Activated naive CD4-positive, alpha-beta T cell treated with anti-CD3 and anti-CD28 coated beads for 36 hours (primary cell): ENCODE measurements at regions of chr17 and their contacts with region 1.

Region 1: GRCh38 chr17:59220376-59221158 is at the start of gene GDPD1:
- DNase-seq: peak; percentile 97
- H3K4me3 Mint-ChIP-seq: peak within 1 kb of the TSS; percentile 93
- H3K27ac Mint-ChIP-seq: peak within 1 kb of the TSS; percentile 56
- H3K4me1 Mint-ChIP-seq: peaks cover 13% of the 10 kb centered on the region
- H3K27me3 Mint-ChIP-seq: no peaks in the 10 kb centered on the region
- total RNA-seq, gene GDPD1: 2.2 TPM

Region 2: GRCh38 chr17:59106463-59107305 is 113.9 kb before region 1 on chr17 and contains the start of gene TRIM37:
- CTCF ChIA-PET with region 1: no interaction called
- intact Hi-C with region 1: loop called (anchors 5 kb)
- DNase-seq: peak; percentile 99
- H3K4me3 Mint-ChIP-seq: peak within 1 kb of the TSS; percentile 96
- H3K27ac Mint-ChIP-seq: peak within 1 kb of the TSS; percentile 89
- H3K4me1 Mint-ChIP-seq: peaks cover 54% of the 10 kb centered on the region
- H3K27me3 Mint-ChIP-seq: no peaks in the 10 kb centered on the region
- total RNA-seq, gene TRIM37: 19.9 to 24.1 TPM

Region 3: DNA sequence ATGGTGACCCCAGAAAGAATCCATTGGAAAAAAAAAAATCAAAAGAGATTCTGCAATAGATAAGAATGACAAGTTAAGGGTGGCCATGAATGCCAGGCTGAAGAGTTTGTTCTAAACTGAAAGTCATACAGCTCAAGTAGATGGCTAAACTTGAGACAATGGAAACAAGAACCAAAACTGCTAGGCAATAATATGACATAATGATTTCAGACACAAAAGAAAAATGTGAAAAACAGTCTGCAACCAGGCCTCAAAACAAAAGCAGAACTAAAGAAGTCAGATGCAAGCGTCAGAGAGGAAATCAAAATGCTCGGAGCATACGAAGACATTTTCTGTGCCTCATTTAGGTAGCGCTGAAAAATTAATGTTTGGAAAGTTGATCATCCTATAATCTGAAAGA is 56.5 kb after region 1 on chr17:
- CTCF ChIA-PET with region 1: no interaction called
- intact Hi-C with region 1: no loop called
- DNase-seq: no peak
- H3K4me3 Mint-ChIP-seq: no peak overlapping the region
- H3K27ac Mint-ChIP-seq: no peak overlapping the region
- H3K4me1 Mint-ChIP-seq: no peaks in the 10 kb centered on the region
- H3K27me3 Mint-ChIP-seq: no peaks in the 10 kb centered on the region

Region 4: DNA sequence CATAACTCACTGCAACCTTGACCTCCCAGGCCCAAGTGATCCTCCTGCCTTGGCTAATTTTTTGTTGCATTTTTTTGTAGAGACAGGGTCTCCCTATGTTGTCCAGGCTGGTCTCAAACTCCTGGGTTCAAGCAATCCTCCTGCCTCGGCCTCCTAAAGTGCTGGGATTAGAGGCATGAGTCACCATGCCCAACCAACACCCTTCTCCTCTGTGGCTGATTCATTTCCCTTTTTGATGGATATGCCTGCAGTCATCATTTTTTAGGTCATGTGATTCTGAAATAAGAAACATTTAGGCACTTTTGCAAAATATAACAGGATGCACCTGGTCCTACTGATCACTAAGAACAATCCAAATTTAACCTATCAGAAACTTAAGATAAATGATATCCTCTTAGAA is 66.9 kb after region 1 on chr17:
- CTCF ChIA-PET with region 1: no interaction called
- intact Hi-C with region 1: no loop called
- DNase-seq: peak; percentile 10
- H3K4me3 Mint-ChIP-seq: no peak overlapping the region
- H3K27ac Mint-ChIP-seq: no peak overlapping the region
- H3K4me1 Mint-ChIP-seq: peaks cover 4% of the 10 kb centered on the region
- H3K27me3 Mint-ChIP-seq: no peaks in the 10 kb centered on the region

Region 5: GRCh38 chr17:59311130-59311920 is 90.8 kb after region 1 on chr17:
- CTCF ChIA-PET with region 1: interaction called, 8 read pairs
- intact Hi-C with region 1: loop called (anchors 1 kb)
- DNase-seq: peak; percentile 54
- H3K4me3 Mint-ChIP-seq: no peak overlapping the region
- H3K27ac Mint-ChIP-seq: no peak overlapping the region
- H3K4me1 Mint-ChIP-seq: no peaks in the 10 kb centered on the region
- H3K27me3 Mint-ChIP-seq: no peaks in the 10 kb centered on the region

Region 6: DNA sequence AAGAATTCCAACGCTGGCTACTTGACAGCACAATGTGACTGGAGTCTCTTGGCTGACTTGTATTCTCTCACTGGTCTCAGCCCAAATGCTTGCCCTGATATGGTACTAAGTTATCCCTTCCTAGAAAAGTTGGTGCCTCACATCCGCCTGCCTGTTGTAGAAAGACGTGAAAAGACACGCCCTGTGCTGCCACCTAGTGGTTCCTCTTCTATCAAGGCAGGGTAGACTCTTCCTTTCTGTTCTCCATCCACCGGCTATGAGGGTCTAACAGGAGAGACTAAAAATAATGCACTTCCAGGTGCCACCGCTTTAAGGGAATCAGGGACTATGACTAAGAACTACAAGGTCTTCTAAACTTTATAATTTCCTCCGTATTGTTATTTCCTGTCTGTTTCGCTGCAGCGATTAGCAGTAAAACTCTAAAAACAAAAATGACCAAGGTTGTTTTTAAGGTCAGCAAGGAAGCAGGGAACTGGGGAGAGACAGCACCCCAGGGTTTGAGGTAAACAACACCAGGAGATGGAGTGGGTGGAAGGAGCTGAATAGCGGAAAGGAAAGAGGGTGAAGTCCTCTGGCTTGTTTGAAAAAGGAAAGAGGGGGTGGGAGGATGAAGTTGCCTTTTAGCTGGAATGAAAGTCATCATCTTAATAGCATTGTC is 220.3 kb after region 1 on chr17:
- CTCF ChIA-PET with region 1: interaction called, 4 read pairs
- intact Hi-C with region 1: loop called (anchors 1 kb)
- DNase-seq: peak; percentile 96
- H3K4me3 Mint-ChIP-seq: peak overlapping the region; percentile 58
- H3K27ac Mint-ChIP-seq: peak overlapping the region; percentile 88
- H3K4me1 Mint-ChIP-seq: peaks cover 37% of the 10 kb centered on the region
- H3K27me3 Mint-ChIP-seq: no peaks in the 10 kb centered on the region